ENCODE measurements at regions of chr18 and their contacts with region 1.

Region 1: DNA sequence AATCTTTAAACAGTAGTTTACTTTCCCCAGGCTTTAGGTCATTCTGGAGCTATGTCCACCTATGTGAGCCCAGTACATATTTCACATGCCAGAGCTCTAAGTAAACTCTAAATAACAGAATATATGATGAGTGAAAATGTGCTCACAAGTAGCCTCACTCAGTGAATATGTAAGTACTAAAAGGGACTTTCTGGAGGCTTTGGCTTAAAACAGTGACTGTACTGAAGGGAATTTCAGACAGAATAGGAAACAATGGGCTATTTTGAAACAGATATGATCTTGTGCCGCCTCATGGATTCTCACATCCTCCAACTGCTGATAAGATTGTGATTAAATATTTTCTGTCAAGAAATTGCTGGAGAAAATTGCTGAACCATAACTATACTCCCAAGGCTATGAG is 747.9 kb downstream of the SOCS6 start:
- DNase-seq: peak; percentile 95
- H3K4me3 ChIP-seq: no peak overlapping the region
- H3K27ac ChIP-seq: peak overlapping the region; percentile 99
- H3K4me1 ChIP-seq: peaks cover 32% of the 10 kb centered on the region
- H3K27me3 ChIP-seq: no peaks in the 10 kb centered on the region
- CTCF ChIP-seq: no peak
- POLR2A ChIP-seq: peak; percentile 55

Region 2: DNA sequence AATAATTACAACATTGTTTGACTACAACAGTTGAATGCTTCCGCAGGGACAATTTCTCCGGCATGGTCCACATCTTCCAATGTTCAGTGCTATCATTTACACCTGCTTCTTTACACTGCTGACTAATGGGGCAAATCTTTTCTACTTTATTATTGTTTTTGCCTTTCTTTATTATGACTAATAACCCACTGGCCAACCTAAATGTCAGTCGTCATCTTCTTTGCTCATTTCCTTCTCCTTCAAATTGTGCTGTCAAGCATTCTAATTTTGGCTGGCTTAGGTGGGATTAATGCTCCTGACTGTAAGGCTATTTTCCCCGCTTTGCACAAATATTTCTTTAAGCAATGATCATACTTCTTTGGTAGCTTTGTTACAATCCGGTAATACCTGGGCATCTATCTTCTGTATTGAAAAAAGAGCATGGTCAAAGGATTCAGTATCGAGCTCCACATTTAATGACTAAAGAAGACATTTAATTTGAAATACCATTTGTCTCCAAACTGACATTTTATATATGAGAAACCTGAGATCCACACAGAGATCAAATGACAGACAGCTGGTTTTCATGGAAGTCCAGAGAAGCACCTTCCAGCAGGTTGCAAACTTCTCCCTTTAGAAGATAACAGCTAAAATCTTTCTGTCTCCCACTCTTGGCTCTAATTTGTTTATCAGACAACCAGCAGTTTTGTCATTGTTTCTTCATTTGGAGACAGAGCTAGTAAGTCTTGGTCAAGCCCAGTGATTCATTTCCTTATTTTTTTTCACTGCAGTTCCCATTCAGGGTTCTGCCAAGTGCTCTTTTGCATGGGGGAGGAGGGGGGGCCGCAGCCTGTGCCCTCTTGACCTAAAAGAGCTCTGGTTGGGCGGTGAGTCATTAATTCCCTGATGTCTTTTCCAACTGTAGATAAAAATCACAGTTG is 615.1 kb before region 1 on chr18:
- CTCF ChIA-PET with region 1: no interaction called
- POLR2A ChIA-PET with region 1: no interaction called
- dilution Hi-C with region 1: no loop called
- intact Hi-C with region 1: loop called (anchors 5 kb)
- DNase-seq: peak; percentile 99
- H3K4me3 ChIP-seq: peak overlapping the region in 2 of 3 experiments; percentile 7 to 62
- H3K27ac ChIP-seq: peak overlapping the region; percentile 99
- H3K4me1 ChIP-seq: peaks cover 38% of the 10 kb centered on the region
- H3K27me3 ChIP-seq: no peaks in the 10 kb centered on the region
- CTCF ChIP-seq: no peak
- POLR2A ChIP-seq: no peak

Region 3: GRCh38 chr18:70931942-70932814 is 104.6 kb before region 1 on chr18:
- CTCF ChIA-PET with region 1: interaction called, 9 read pairs
- POLR2A ChIA-PET with region 1: no interaction called
- dilution Hi-C with region 1: no loop called
- intact Hi-C with region 1: loop called (anchors 1 kb)
- DNase-seq: peak; percentile 63
- H3K4me3 ChIP-seq: no peak overlapping the region
- H3K27ac ChIP-seq: no peak overlapping the region
- H3K4me1 ChIP-seq: no peaks in the 10 kb centered on the region
- H3K27me3 ChIP-seq: no peaks in the 10 kb centered on the region
- CTCF ChIP-seq: peak; percentile 45 to 49
- POLR2A ChIP-seq: no peak

Region 4: DNA sequence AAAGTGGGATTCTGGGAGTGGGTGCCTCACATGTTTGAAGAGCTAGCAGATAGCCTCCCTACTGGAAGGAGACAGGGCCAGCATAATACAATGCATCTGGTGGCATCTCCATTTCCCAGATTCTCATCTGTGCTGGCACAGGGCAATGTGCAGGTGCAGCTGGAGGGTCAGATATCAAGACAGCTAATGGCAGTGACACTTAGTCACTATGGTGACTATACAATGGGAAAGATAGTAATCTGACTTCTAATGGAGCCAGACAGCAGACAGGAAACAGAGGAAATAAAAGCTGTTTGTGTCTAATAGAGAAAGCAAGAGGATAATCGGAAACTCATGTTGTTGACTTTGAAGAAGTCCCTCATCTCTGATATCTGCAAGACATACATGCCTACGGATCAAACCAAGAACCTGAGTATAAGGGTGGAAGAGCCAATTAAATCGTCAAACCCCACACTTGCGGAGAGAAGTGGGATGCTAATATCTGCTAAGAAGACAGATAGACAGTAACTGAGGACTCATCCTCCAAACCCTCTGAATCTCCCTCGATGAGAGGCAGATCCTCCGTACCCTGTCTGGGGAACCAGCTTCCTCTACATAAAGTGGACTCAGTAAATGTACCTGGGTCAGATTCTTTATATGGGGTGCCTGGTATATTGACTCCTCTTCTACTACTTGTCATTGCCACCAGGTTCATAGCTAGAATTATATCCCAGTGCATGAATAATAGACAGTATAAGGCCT is 55.2 kb before region 1 on chr18:
- CTCF ChIA-PET with region 1: interaction called, 3 read pairs
- POLR2A ChIA-PET with region 1: interaction called, 3 read pairs
- dilution Hi-C with region 1: no loop called
- intact Hi-C with region 1: loop called (anchors 1 kb)
- DNase-seq: peak; percentile 73
- H3K4me3 ChIP-seq: no peak overlapping the region
- H3K27ac ChIP-seq: peak overlapping the region; percentile 69
- H3K4me1 ChIP-seq: peaks cover 14% of the 10 kb centered on the region
- H3K27me3 ChIP-seq: no peaks in the 10 kb centered on the region
- CTCF ChIP-seq: no peak
- POLR2A ChIP-seq: no peak

Region 5: DNA sequence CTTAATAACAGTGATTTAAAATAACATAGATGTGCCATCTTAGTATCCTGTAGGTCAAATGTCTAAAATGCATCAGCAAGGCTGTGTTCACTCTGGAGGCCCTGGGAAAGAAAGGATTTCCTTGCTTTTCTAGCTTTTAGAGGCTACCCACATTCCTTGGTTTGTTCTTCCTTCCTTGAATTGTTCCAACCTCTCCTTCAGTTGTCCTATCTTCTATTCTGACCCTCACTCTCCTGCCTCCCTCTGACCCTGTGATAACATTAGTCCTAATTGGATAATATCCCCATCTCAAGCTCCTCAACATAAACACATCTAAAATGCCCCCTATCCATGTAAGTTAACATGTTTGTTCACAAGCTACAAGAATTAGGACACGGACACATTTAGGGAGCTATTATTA is 14.4 kb before region 1 on chr18:
- CTCF ChIA-PET with region 1: interaction called, 7 read pairs
- POLR2A ChIA-PET with region 1: interaction called, 3 read pairs
- dilution Hi-C with region 1: no loop called
- intact Hi-C with region 1: loop called (anchors 1 kb)
- DNase-seq: peak; percentile 73
- H3K4me3 ChIP-seq: no peak overlapping the region
- H3K27ac ChIP-seq: peak overlapping the region; percentile 35
- H3K4me1 ChIP-seq: peaks cover 52% of the 10 kb centered on the region
- H3K27me3 ChIP-seq: no peaks in the 10 kb centered on the region
- CTCF ChIP-seq: no peak
- POLR2A ChIP-seq: no peak

Region 6: GRCh38 chr18:71075147-71075546 is 38.4 kb after region 1 on chr18:
- CTCF ChIA-PET with region 1: no interaction called
- POLR2A ChIA-PET with region 1: no interaction called
- dilution Hi-C with region 1: no loop called
- intact Hi-C with region 1: no loop called
- DNase-seq: no peak
- H3K4me3 ChIP-seq: no peak overlapping the region
- H3K27ac ChIP-seq: no peak overlapping the region
- H3K4me1 ChIP-seq: no peaks in the 10 kb centered on the region
- H3K27me3 ChIP-seq: no peaks in the 10 kb centered on the region
- CTCF ChIP-seq: no peak
- POLR2A ChIP-seq: no peak

Region 7: DNA sequence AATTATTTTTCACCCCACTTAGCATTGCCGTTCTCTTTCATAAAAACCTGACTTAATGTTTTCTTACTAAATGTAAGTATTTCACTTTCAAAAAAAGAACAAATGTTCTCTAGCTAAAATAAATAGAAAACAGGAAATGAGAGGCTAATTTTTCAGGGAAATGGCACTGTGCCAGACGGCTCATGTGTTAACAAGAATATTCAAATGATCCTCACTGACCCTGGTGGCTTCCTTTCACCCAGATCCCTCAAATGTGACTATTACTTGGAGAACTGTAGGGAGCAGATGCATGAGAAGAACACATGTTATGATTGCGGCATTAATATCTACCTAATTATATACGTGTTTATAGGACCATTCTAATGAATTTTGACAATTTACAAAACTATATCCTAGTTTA is 79.8 kb after region 1 on chr18:
- CTCF ChIA-PET with region 1: no interaction called
- POLR2A ChIA-PET with region 1: no interaction called
- dilution Hi-C with region 1: no loop called
- intact Hi-C with region 1: loop called (anchors 1 kb)
- DNase-seq: peak; percentile 83
- H3K4me3 ChIP-seq: no peak overlapping the region
- H3K27ac ChIP-seq: peak overlapping the region; percentile 52
- H3K4me1 ChIP-seq: peaks cover 25% of the 10 kb centered on the region
- H3K27me3 ChIP-seq: no peaks in the 10 kb centered on the region
- CTCF ChIP-seq: no peak
- POLR2A ChIP-seq: no peak

Region 8: GRCh38 chr18:71189581-71189980 is 152.8 kb after region 1 on chr18:
- CTCF ChIA-PET with region 1: no interaction called
- POLR2A ChIA-PET with region 1: no interaction called
- dilution Hi-C with region 1: no loop called
- intact Hi-C with region 1: no loop called
- DNase-seq: no peak
- H3K4me3 ChIP-seq: no peak overlapping the region
- H3K27ac ChIP-seq: no peak overlapping the region
- H3K4me1 ChIP-seq: no peaks in the 10 kb centered on the region
- H3K27me3 ChIP-seq: no peaks in the 10 kb centered on the region
- CTCF ChIP-seq: no peak
- POLR2A ChIP-seq: no peak

Region 9: DNA sequence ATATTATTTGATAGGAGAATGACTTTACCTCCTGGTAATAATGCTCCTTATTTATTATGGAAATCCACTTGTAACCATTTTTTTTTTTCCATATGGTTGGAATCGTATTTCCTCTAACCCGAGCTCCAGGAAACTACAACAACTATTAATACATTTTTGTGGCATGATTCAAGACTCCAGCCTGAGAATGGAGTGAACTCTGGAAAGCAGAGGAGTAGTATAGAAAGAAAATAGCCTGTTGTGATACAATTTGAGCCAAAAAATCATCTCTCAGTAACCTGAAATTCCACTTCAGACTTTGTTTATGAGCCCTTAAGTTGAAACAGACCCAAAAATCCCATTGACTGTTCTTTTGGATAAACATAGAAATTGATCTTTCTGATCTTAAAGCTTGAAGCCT is 173.2 kb after region 1 on chr18:
- CTCF ChIA-PET with region 1: no interaction called
- POLR2A ChIA-PET with region 1: no interaction called
- dilution Hi-C with region 1: no loop called
- intact Hi-C with region 1: loop called (anchors 1 kb)
- DNase-seq: peak; percentile 90
- H3K4me3 ChIP-seq: no peak overlapping the region
- H3K27ac ChIP-seq: peak overlapping the region; percentile 70
- H3K4me1 ChIP-seq: peaks cover 11% of the 10 kb centered on the region
- H3K27me3 ChIP-seq: no peaks in the 10 kb centered on the region
- CTCF ChIP-seq: no peak
- POLR2A ChIP-seq: no peak